B cell (primary cell): ENCODE measurements at regions of chr14 and their contacts with region 1.

Region 1: DNA sequence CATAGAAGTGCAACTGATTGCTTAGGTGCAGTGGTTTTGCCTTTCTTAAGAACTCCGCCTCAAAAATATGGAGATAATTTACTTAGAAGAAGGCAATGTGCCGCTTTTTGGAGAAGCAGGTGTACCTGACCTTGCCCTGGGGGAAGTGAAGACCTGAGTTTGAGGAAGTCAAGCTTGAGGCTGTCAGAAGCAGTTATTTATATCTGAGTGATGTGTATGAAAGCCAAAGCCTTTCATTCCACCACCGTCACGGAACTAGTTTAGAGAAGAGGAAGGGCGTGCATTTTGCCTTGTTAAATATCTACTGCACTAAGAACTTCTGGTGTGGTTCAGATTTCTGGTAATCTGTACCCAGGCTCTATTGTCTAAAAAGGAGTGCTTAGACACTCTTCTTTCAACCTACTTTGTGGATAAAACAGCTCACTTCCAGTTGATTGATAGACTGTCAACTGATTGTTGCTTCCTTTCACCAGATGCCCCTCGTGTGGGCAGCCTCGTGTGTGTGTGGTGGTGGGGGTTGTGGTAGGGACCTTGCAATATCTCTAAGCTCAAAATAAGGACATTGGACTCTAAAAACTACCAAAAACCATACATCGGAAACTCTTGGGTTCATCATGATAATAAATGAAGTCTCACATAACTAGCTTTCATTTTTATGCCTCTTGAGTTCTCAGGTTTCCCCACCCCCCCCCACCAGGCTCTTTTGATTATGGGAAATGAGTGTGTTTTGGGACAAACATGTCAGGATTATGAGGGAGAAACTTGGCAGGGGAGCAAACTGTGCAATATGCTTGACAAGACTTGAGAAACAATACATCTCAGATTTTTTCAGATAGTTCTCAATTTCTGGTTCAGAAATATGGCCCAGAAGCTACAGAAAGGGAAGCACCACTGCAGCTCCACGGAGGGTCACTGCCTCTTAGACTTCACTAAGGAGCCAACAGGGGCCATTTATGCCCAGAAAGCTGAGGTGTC is 78.6 kb downstream of the ARF6 start:
- DNase-seq: peak; percentile 92
- ATAC-seq: peak; percentile 85
- H3K4me3 ChIP-seq: peak overlapping the region in 2 of 5 experiments; percentile 30 to 32
- H3K4me3 Mint-ChIP-seq: peak overlapping the region; percentile 55
- H3K27ac ChIP-seq: peak overlapping the region; percentile 98 to 99
- H3K27ac Mint-ChIP-seq: peak overlapping the region; percentile 97
- H3K4me1 ChIP-seq: peaks cover 57 to 70% of the 10 kb centered on the region in 2 donors
- H3K4me1 Mint-ChIP-seq: peaks cover 62% of the 10 kb centered on the region
- H3K27me3 ChIP-seq: no peaks in the 10 kb centered on the region
- H3K27me3 Mint-ChIP-seq: no peaks in the 10 kb centered on the region
- CTCF ChIP-seq: no peak

Region 2: DNA sequence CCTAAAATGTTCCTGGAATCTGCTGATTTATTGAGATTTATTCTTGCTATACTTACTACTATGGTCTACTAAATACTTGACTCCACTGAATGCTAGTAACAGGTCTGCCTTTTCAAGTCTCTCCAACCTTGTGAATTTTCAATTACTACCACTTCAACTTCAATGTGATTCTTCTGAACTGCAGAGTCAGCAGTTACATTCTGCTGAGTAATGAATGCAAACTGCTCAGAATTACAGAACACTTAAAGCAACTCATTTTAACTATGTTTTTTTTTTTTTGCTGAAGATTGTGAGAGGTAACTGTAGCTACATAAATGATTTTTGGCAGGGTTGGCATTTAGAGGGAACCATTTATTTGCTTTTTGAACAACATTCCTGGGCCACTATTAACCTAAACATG is 36.8 kb before region 1 on chr14:
- CTCF ChIA-PET with region 1: interaction called, 6 read pairs
- POLR2A ChIA-PET with region 1: interaction called, 9 read pairs
- intact Hi-C with region 1: loop called (anchors 1 kb)
- DNase-seq: no peak
- ATAC-seq: no peak
- H3K4me3 ChIP-seq: no peak overlapping the region
- H3K4me3 Mint-ChIP-seq: no peak overlapping the region
- H3K27ac ChIP-seq: no peak overlapping the region
- H3K27ac Mint-ChIP-seq: no peak overlapping the region
- H3K4me1 ChIP-seq: peaks cover 16 to 26% of the 10 kb centered on the region in 2 donors
- H3K4me1 Mint-ChIP-seq: peaks cover 33% of the 10 kb centered on the region
- H3K27me3 ChIP-seq: no peaks in the 10 kb centered on the region
- H3K27me3 Mint-ChIP-seq: no peaks in the 10 kb centered on the region
- CTCF ChIP-seq: no peak

Region 3: DNA sequence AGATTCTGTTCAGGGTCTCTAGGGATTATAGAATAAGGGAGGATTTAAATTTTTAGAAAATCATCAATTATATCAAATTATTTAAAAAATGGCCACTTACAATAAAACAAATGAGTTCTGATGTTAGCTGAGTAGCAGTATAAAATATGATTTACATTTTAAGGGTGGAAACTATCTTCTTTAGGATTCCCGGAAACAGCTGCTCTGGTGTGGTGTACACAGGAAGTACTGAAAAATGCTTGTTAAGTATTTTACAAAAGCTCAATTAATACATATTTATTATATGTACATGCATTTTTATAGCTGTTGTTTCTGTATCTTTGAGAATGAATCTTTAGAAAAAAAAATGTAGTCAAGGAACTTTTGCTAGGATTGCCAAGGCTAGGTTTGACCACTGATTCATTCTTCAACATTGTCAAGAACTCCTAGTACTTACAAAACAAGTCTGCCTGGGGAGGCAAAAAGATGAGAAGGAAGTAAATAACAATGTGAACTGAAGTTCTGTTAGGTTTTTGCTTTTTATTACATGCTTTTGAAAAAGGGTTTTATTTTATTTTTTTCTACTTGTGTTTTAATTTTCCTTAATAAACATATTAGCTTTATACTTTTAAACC is 30.5 kb before region 1 on chr14:
- CTCF ChIA-PET with region 1: interaction called, 4 read pairs
- POLR2A ChIA-PET with region 1: interaction called, 11 read pairs
- intact Hi-C with region 1: no loop called
- DNase-seq: no peak
- ATAC-seq: no peak
- H3K4me3 ChIP-seq: peak overlapping the region in 1 of 5 experiments; percentile 29
- H3K4me3 Mint-ChIP-seq: peak overlapping the region; percentile 41
- H3K27ac ChIP-seq: peak overlapping the region in 1 of 2 donors; percentile 54
- H3K27ac Mint-ChIP-seq: peak overlapping the region; percentile 65
- H3K4me1 ChIP-seq: peaks cover 22 to 25% of the 10 kb centered on the region in 2 donors
- H3K4me1 Mint-ChIP-seq: peaks cover 44% of the 10 kb centered on the region
- H3K27me3 ChIP-seq: no peaks in the 10 kb centered on the region
- H3K27me3 Mint-ChIP-seq: no peaks in the 10 kb centered on the region
- CTCF ChIP-seq: no peak

Region 4: DNA sequence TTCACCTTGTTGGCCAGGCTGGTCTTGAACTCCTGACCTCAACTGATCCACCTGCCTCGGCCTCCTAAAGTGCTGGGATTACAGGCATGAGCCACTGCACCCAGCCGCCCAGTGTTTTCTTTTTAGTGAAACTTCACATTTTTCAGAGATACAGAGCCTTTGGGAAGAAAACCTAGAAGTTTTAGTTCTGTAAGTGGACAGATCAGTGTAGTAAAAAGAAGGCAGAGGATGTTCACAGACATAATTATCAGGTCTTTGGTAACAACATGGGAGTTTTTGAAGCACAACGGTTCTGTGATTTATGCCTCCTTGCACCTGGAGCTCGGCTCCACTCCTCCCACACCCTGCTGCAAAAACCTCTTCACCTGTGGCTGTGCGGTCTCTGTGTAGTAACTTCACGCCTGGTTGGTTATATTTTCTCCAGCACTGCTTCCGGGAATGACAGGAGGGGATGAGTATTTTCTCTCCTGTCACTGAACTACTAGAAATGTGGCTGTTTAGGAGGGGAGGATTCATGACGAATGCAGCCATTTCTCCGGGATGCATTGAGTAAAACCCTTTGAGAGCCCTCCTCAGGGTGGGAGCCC is 11.5 kb before region 1 on chr14:
- CTCF ChIA-PET with region 1: interaction called, 14 read pairs
- POLR2A ChIA-PET with region 1: interaction called, 19 read pairs
- intact Hi-C with region 1: loop called (anchors 1 kb)
- DNase-seq: peak; percentile 77
- ATAC-seq: peak; percentile 68
- H3K4me3 ChIP-seq: peak overlapping the region in 4 of 5 experiments; percentile 0 to 48 (median 24)
- H3K4me3 Mint-ChIP-seq: peak overlapping the region; percentile 78
- H3K27ac ChIP-seq: peak overlapping the region; percentile 74 to 75
- H3K27ac Mint-ChIP-seq: peak overlapping the region; percentile 86
- H3K4me1 ChIP-seq: peaks cover 60 to 65% of the 10 kb centered on the region in 2 donors
- H3K4me1 Mint-ChIP-seq: peaks cover 70% of the 10 kb centered on the region
- H3K27me3 ChIP-seq: no peaks in the 10 kb centered on the region
- H3K27me3 Mint-ChIP-seq: no peaks in the 10 kb centered on the region
- CTCF ChIP-seq: no peak

Region 5: GRCh38 chr14:50045039-50045711 is 73.7 kb after region 1 on chr14:
- CTCF ChIA-PET with region 1: interaction called, 4 read pairs
- POLR2A ChIA-PET with region 1: interaction called, 6 read pairs
- intact Hi-C with region 1: loop called (anchors 2 kb)
- DNase-seq: peak; percentile 75
- ATAC-seq: peak; percentile 71
- H3K4me3 ChIP-seq: no peak overlapping the region
- H3K4me3 Mint-ChIP-seq: peak overlapping the region; percentile 49
- H3K27ac ChIP-seq: peak overlapping the region; percentile 92 to 95
- H3K27ac Mint-ChIP-seq: peak overlapping the region; percentile 88
- H3K4me1 ChIP-seq: peaks cover 60 to 62% of the 10 kb centered on the region in 2 donors
- H3K4me1 Mint-ChIP-seq: peaks cover 76% of the 10 kb centered on the region
- H3K27me3 ChIP-seq: no peaks in the 10 kb centered on the region
- H3K27me3 Mint-ChIP-seq: no peaks in the 10 kb centered on the region
- CTCF ChIP-seq: no peak

Region 6: GRCh38 chr14:50070840-50071548 is 99.6 kb after region 1 on chr14:
- CTCF ChIA-PET with region 1: no interaction called
- POLR2A ChIA-PET with region 1: no interaction called
- intact Hi-C with region 1: no loop called
- DNase-seq: no peak
- ATAC-seq: no peak
- H3K4me3 ChIP-seq: no peak overlapping the region
- H3K4me3 Mint-ChIP-seq: no peak overlapping the region
- H3K27ac ChIP-seq: peak overlapping the region; percentile 2 to 47
- H3K27ac Mint-ChIP-seq: peak overlapping the region; percentile 70
- H3K4me1 ChIP-seq: peaks cover 21% of the 10 kb centered on the region in 2 donors
- H3K4me1 Mint-ChIP-seq: peaks cover 48% of the 10 kb centered on the region
- H3K27me3 ChIP-seq: no peaks in the 10 kb centered on the region
- H3K27me3 Mint-ChIP-seq: no peaks in the 10 kb centered on the region
- CTCF ChIP-seq: no peak

Region 7: DNA sequence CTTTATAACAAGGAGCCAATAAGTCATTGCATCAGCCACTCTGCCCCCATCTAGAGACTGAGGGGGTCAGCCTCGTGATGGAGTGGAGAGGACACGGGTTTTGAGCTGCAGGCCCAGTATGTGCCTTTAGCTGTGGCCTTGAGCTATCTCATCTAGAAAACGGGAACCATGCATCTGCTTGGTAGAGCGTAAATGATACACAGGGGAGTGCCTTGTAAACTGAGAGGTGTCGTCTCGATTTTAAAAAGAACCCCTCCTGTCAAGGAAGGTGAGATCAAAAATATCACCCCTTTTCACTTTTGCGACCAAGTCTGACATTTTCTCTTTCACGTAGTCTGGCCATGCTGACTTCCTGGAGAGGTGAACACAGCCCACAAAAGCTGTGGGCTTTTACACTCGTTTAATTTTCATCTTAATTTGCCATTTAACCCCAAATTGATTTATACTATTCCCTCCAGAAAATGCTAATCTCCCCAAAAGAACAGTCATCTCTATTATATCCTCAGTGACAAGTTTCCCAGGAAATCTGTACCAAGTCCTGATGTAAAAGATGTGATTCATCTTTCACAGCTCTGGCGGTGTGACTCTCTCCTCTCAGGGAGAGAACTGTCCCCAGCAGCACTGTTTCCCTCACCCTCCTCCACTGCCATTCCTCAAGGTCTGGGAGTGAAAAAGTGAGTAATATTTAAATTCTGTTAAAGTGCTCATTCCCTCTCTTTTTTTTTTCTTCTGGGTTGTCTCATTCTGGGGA is 114.3 kb after region 1 on chr14:
- CTCF ChIA-PET with region 1: interaction called, 3 read pairs
- POLR2A ChIA-PET with region 1: interaction called, 11 read pairs
- intact Hi-C with region 1: loop called (anchors 2 kb)
- DNase-seq: peak; percentile 91
- ATAC-seq: peak; percentile 75
- H3K4me3 ChIP-seq: peak overlapping the region in 3 of 5 experiments; percentile 18 to 48 (median 24)
- H3K4me3 Mint-ChIP-seq: peak overlapping the region; percentile 82
- H3K27ac ChIP-seq: peak overlapping the region; percentile 95 to 100
- H3K27ac Mint-ChIP-seq: peak overlapping the region; percentile 96
- H3K4me1 ChIP-seq: peaks cover 85 to 91% of the 10 kb centered on the region in 2 donors
- H3K4me1 Mint-ChIP-seq: peaks cover 87% of the 10 kb centered on the region
- H3K27me3 ChIP-seq: no peaks in the 10 kb centered on the region
- H3K27me3 Mint-ChIP-seq: no peaks in the 10 kb centered on the region
- CTCF ChIP-seq: no peak

Region 8: GRCh38 chr14:50109342-50109741 is 137.9 kb after region 1 on chr14:
- CTCF ChIA-PET with region 1: interaction called, 14 read pairs
- POLR2A ChIA-PET with region 1: interaction called, 5 read pairs
- intact Hi-C with region 1: loop called (anchors 1 kb)
- DNase-seq: no peak
- ATAC-seq: no peak
- H3K4me3 ChIP-seq: no peak overlapping the region
- H3K4me3 Mint-ChIP-seq: no peak overlapping the region
- H3K27ac ChIP-seq: peak overlapping the region in 1 of 2 donors; percentile 85
- H3K27ac Mint-ChIP-seq: no peak overlapping the region
- H3K4me1 ChIP-seq: peaks cover 28 to 34% of the 10 kb centered on the region in 2 donors
- H3K4me1 Mint-ChIP-seq: peaks cover 40% of the 10 kb centered on the region
- H3K27me3 ChIP-seq: no peaks in the 10 kb centered on the region
- H3K27me3 Mint-ChIP-seq: no peaks in the 10 kb centered on the region
- CTCF ChIP-seq: no peak